ENCODE measurements at regions of chr10 and their contacts with region 1.

Region 1: GRCh38 chr10:58781873-58782488 is 269.3 kb downstream of the BICC1 start:
- DNase-seq: no peak
- ATAC-seq: peak; percentile 14 to 51

Region 2: GRCh38 chr10:59181668-59182067 is 399.7 kb after region 1 on chr10:
- intact Hi-C with region 1: loop called in 1 of 2 experiments (anchors 2 kb)
- DNase-seq: no peak
- ATAC-seq: peak; percentile 59 to 74

Region 3: DNA sequence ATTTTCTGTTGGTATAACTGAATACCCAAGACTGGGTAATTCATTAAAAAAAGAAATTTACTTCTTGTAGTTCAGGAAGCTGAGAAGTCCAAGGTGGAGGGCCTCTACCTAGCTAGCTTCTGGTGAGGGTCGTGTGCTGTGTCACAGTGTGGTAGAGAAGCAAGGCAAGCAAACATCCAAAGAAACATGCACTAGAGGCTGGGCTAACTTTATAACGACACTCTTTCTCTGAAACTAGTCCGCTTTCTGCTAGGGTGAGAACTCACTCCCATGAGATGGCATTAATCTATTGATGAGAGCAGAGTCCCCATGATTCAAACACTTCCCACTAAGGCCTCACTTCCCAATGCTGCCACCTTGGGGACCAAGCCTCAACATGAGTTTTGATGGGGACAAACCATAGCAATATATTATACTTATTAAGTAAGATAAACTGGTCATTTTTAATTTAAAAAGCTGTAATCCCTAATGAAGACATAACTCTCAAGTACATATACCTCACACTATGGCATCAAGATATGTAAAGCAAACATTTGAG is 445.2 kb after region 1 on chr10:
- intact Hi-C with region 1: loop called in 1 of 2 experiments (anchors 10 kb)
- DNase-seq: no peak
- ATAC-seq: no peak